ENCODE measurements at regions of chr19 and their contacts with region 1.

Region 1: GRCh38 chr19:35347171-35347929 is at the start of gene FFAR1:
- DNase-seq: peak; percentile 83
- H3K4me3 Mint-ChIP-seq: peak within 1 kb of the TSS; percentile 79
- H3K27ac Mint-ChIP-seq: peak within 1 kb of the TSS; percentile 98
- H3K4me1 Mint-ChIP-seq: peaks cover 43% of the 10 kb centered on the region
- H3K27me3 Mint-ChIP-seq: peaks cover 8% of the 10 kb centered on the region
- total RNA-seq, gene FFAR1: 0.12 and 0.14 TPM in 2 replicates

Region 2: GRCh38 chr19:35213663-35214632 is 133.4 kb before region 1 on chr19:
- intact Hi-C with region 1: loop called (anchors 2 kb)
- DNase-seq: peak; percentile 88
- H3K4me3 Mint-ChIP-seq: peak overlapping the region; percentile 19
- H3K27ac Mint-ChIP-seq: peak overlapping the region; percentile 84
- H3K4me1 Mint-ChIP-seq: peaks cover 56% of the 10 kb centered on the region
- H3K27me3 Mint-ChIP-seq: no peaks in the 10 kb centered on the region

Region 3: GRCh38 chr19:35269421-35270117 is 77.8 kb before region 1 on chr19:
- intact Hi-C with region 1: loop called (anchors 1 kb)
- DNase-seq: peak; percentile 92
- H3K4me3 Mint-ChIP-seq: peak overlapping the region; percentile 73
- H3K27ac Mint-ChIP-seq: peak overlapping the region; percentile 71
- H3K4me1 Mint-ChIP-seq: peaks cover 14% of the 10 kb centered on the region
- H3K27me3 Mint-ChIP-seq: no peaks in the 10 kb centered on the region

Region 4: GRCh38 chr19:35332817-35333216 is 14.5 kb before region 1 on chr19:
- intact Hi-C with region 1: loop called (anchors 2 kb)
- DNase-seq: peak; percentile 78
- H3K4me3 Mint-ChIP-seq: peak overlapping the region; percentile 45
- H3K27ac Mint-ChIP-seq: peak overlapping the region; percentile 75
- H3K4me1 Mint-ChIP-seq: peaks cover 31% of the 10 kb centered on the region
- H3K27me3 Mint-ChIP-seq: no peaks in the 10 kb centered on the region

Region 5: GRCh38 chr19:35380450-35381124 is 33.2 kb after region 1 on chr19:
- intact Hi-C with region 1: no loop called
- DNase-seq: no peak
- H3K4me3 Mint-ChIP-seq: no peak overlapping the region
- H3K27ac Mint-ChIP-seq: no peak overlapping the region
- H3K4me1 Mint-ChIP-seq: no peaks in the 10 kb centered on the region
- H3K27me3 Mint-ChIP-seq: peaks cover 11% of the 10 kb centered on the region

Region 6: DNA sequence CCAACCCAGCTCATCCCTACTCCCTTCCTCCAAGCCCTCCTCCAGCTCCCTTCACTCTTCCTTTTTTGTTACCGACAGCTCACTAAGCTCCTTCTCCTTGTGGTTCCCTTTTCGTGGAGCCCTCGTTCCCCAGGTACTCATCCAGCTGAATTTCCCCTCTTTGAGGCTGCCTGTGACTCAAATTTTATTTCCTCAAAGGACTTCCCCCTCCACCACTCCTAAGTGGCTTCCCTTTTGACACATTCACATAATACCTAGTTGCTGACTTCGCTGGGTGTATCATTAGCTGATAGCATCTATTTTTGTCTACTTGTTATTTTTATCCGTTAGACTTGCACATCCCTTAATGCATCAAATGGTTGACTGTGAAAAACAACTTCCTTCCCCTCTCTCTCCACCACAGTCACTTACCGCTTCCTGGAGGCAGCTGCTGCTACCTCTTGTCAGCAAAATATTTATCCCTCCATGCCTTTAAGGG is 115.2 kb after region 1 on chr19:
- intact Hi-C with region 1: loop called (anchors 1 kb)
- DNase-seq: peak; percentile 86
- H3K4me3 Mint-ChIP-seq: peak overlapping the region; percentile 56
- H3K27ac Mint-ChIP-seq: peak overlapping the region; percentile 80
- H3K4me1 Mint-ChIP-seq: peaks cover 31% of the 10 kb centered on the region
- H3K27me3 Mint-ChIP-seq: peaks cover 4% of the 10 kb centered on the region

Measured in activated CD4-positive, alpha-beta T cell treated with anti-CD3 and anti-CD28 coated beads, Interleukin-2, amount 10 ng/mL, durations not matched to agents 24 days and 14 days (primary cell).